CD4-positive, alpha-beta memory T cell (primary cell): ENCODE measurements at regions of chr19 and their contacts with region 1.

Region 1: DNA sequence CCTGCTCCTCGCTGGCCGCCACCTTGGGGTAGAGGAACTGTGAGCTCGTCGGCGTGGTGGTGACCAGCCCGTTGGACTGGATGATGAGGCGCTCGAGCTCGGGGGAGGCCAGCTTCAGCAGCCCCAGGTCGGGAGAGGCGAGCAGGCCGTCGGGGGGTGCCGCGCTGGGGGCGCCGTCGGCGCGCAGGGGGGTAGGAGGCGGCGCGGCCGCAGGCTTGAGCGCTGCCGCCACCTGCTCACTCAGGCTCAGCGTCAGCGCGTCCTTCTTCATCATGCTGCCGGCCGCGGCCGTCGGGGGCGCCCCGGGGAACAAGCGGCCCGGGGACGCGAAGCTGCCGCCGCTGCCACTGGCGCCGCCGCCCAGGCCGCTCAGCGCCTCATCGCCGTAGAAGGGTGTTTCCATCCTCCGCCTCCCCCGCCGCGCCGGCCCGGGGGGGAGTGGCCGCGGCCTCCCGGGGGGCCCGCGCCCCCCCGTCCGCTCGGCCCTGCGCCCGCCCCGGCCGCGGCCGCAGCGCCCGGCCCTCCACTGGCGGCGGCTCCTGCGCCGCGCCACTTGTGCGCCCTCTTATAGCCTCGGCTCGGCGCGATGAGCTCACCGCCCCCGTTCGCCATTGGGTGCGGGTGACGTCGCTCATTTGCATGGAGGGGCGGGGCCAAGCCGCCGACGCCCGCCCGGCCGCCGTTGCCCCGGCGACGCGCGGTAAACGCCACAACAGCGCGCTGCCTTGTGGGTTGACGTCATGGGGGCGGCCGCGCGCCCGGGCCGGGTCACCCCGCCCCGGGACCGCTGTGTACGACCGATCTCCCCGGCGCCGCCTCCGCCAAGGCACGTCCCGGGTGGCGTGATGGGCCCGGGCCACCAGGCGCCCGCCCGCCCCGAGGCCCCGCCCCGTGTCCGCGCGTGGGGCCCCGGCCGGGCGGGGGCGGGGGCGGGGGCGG is at the start of gene JUND:
- DNase-seq: peak; percentile 97 to 99 (median 99)
- H3K4me3 ChIP-seq: peak within 1 kb of the TSS; percentile 79 to 85
- H3K4me3 Mint-ChIP-seq: peak within 1 kb of the TSS; percentile 88 to 99 (median 96)
- H3K27ac ChIP-seq: peak within 1 kb of the TSS; percentile 98
- H3K27ac Mint-ChIP-seq: peak within 1 kb of the TSS; percentile 97 to 100 (median 98)
- H3K4me1 ChIP-seq: peaks cover 50% of the 10 kb centered on the region
- H3K4me1 Mint-ChIP-seq: peaks cover 30 to 60% (median 46%) of the 10 kb centered on the region in 4 donors
- H3K27me3 ChIP-seq: no peaks in the 10 kb centered on the region
- H3K27me3 Mint-ChIP-seq: peaks cover 0 to 6% of the 10 kb centered on the region in 2 donors
- total RNA-seq, gene JUND: 163 TPM

Region 2: DNA sequence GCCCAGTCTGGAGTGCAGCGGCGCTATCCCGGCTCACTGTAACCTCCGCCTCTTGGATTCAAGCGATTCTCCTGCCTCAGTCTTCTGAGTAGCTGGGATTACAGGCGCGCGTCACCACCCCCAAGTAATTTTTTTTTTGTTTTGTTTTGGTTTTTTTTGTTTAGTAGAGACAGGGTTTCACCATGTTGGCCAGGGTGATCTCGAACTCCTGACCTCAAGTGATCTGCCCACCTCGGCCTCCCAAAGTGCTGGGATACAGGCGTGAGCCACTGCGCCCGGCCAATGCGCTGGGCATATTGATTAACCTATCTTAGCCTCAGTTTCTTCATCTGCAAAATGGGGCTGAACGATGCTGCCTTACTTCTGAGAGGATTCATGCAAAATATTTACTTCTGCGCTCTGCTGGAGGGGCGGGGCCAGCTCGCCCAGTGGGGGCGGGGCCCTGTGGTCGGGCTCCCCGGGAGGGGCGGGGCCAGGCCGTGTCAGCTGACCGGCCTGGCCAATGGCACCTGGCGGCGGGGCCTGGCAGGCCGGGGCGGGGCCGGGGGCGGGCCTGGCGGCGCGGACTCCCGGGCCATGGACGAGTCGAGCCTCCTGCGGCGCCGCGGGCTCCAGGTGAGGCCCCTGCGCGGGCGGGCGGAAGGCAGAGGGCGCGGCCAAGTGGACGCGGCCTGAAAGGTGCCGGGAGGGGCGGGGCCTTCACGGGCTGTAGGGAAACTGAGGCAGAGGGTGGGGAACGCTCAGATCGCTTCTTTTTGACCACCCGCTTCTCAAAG is 183.9 kb before region 1 on chr19 and contains the start of gene MAST3:
- CTCF ChIA-PET with region 1: no interaction called
- POLR2A ChIA-PET with region 1: interaction called, 26 read pairs
- intact Hi-C with region 1: no loop called
- DNase-seq: peak; percentile 87 to 93 (median 93)
- H3K4me3 ChIP-seq: peak within 1 kb of the TSS; percentile 38 to 70
- H3K4me3 Mint-ChIP-seq: peak within 1 kb of the TSS; percentile 87 to 95 (median 89)
- H3K27ac ChIP-seq: peak within 1 kb of the TSS; percentile 68
- H3K27ac Mint-ChIP-seq: peak within 1 kb of the TSS; percentile 85 to 93 (median 89)
- H3K4me1 ChIP-seq: peaks cover 36% of the 10 kb centered on the region
- H3K4me1 Mint-ChIP-seq: peaks cover 22 to 50% (median 38%) of the 10 kb centered on the region in 4 donors
- H3K27me3 ChIP-seq: no peaks in the 10 kb centered on the region
- H3K27me3 Mint-ChIP-seq: no peaks in the 10 kb centered on the region
- total RNA-seq, gene MAST3: 51.6 to 53.9 TPM

Region 3: DNA sequence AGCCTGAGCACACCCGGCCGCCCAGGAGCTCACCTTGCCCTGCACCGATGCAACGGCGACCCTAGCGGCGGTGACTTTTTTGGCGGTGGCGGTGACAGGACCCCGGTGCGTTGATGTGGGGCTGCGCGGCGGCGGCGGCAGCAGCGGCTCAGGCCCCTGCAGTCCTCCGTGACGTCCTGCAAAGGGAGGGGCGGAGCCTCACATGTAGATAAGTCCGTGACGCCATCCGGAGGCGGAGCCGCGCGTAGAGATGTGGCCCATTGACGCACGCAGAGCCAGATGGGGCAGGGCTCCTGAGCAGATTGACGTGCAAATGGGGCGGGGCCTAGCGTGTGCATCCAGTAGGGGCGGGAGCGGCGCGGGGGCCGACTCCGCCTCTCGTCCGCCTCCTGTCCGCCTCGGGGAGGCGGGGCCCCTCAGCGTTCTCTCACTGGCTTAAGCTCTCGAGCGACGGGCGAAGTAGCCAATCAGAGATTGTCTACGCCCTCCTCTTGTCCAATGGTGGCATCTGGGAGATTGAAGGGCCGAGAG is 77.4 kb before region 1 on chr19 and contains the start of gene RAB3A:
- CTCF ChIA-PET with region 1: interaction called, 13 read pairs
- POLR2A ChIA-PET with region 1: interaction called, 77 read pairs
- intact Hi-C with region 1: loop called (anchors 2 kb)
- DNase-seq: peak; percentile 98 to 100 (median 100)
- H3K4me3 ChIP-seq: peak within 1 kb of the TSS; percentile 84 to 93
- H3K4me3 Mint-ChIP-seq: peak within 1 kb of the TSS; percentile 91 to 98 (median 96)
- H3K27ac ChIP-seq: peak within 1 kb of the TSS; percentile 63
- H3K27ac Mint-ChIP-seq: peak within 1 kb of the TSS; percentile 79 to 98 (median 98)
- H3K4me1 ChIP-seq: peaks cover 23% of the 10 kb centered on the region
- H3K4me1 Mint-ChIP-seq: peaks cover 13 to 33% (median 21%) of the 10 kb centered on the region in 4 donors
- H3K27me3 ChIP-seq: no peaks in the 10 kb centered on the region
- H3K27me3 Mint-ChIP-seq: peaks cover 0 to 1% of the 10 kb centered on the region in 2 donors
- total RNA-seq, gene RAB3A: 4.7 to 4.8 TPM

Region 4: DNA sequence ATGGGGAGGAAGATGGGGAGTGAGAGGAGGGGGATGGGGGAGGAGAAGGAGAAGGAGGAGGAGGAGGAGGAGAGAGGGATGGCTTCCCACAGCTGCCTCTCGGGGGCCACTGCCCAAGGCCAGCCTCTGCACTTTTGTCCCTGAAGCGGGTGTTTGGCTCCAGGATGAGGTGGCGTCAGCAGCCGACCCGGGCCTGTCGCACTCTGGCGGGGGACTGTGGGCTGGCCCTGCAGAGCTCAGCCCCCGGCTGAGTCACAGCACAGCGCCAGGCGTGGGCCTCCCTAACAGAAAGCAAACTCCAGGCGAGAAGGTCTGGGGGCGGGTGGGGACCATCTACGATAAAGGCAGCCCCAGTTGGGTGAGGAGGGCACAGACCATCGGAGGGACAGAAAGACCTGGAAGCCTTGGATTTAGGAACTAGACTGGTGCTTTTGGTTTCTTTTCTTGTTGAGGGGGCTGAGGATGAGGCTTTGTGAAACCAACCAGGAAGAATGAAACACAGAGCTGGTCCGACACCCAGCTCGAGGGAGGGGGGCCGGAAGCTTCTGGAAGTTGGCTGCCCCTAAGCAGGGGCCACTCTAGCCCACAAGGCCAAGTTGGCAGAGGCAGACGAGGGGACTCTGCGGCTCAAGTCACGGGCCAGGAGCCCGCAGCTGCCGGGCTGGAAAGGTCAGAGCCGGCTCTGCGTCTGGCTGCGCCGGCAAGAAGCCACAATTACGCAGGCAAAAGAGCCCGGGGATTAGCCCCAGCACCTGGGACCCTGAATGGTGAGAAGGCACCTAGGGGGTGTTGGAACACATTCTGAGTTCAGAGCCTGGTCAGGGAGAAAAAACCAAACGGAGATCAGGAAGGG is 23.3 kb after region 1 on chr19:
- CTCF ChIA-PET with region 1: interaction called, 118 read pairs
- POLR2A ChIA-PET with region 1: interaction called, 1,691 read pairs
- intact Hi-C with region 1: loop called (anchors 1 kb)
- DNase-seq: peak; percentile 73 to 88 (median 78)
- H3K4me3 ChIP-seq: peak overlapping the region; percentile 82 to 88
- H3K4me3 Mint-ChIP-seq: peak overlapping the region; percentile 89 to 98 (median 95)
- H3K27ac ChIP-seq: peak overlapping the region; percentile 99
- H3K27ac Mint-ChIP-seq: peak overlapping the region; percentile 99 to 100 (median 99)
- H3K4me1 ChIP-seq: peaks cover 70% of the 10 kb centered on the region
- H3K4me1 Mint-ChIP-seq: peaks cover 19 to 54% (median 34%) of the 10 kb centered on the region in 4 donors
- H3K27me3 ChIP-seq: no peaks in the 10 kb centered on the region
- H3K27me3 Mint-ChIP-seq: no peaks in the 10 kb centered on the region

Region 5: GRCh38 chr19:18340190-18340989 is 59.0 kb after region 1 on chr19 and contains the start of gene PGPEP1:
- CTCF ChIA-PET with region 1: interaction called, 37 read pairs
- POLR2A ChIA-PET with region 1: interaction called, 77 read pairs
- intact Hi-C with region 1: no loop called
- DNase-seq: peak in 4 of 5 donors; percentile 37 to 68 (median 41)
- H3K4me3 ChIP-seq: peak within 1 kb of the TSS; percentile 61 to 62
- H3K4me3 Mint-ChIP-seq: peak within 1 kb of the TSS; percentile 87 to 94 (median 90)
- H3K27ac ChIP-seq: peak within 1 kb of the TSS; percentile 61
- H3K27ac Mint-ChIP-seq: peak within 1 kb of the TSS; percentile 37 to 95 (median 87)
- H3K4me1 ChIP-seq: peaks cover 24% of the 10 kb centered on the region
- H3K4me1 Mint-ChIP-seq: peaks cover 5 to 25% (median 13%) of the 10 kb centered on the region in 4 donors
- H3K27me3 ChIP-seq: no peaks in the 10 kb centered on the region
- H3K27me3 Mint-ChIP-seq: no peaks in the 10 kb centered on the region
- total RNA-seq, gene PGPEP1: 46.2 to 49.2 TPM

Region 6: DNA sequence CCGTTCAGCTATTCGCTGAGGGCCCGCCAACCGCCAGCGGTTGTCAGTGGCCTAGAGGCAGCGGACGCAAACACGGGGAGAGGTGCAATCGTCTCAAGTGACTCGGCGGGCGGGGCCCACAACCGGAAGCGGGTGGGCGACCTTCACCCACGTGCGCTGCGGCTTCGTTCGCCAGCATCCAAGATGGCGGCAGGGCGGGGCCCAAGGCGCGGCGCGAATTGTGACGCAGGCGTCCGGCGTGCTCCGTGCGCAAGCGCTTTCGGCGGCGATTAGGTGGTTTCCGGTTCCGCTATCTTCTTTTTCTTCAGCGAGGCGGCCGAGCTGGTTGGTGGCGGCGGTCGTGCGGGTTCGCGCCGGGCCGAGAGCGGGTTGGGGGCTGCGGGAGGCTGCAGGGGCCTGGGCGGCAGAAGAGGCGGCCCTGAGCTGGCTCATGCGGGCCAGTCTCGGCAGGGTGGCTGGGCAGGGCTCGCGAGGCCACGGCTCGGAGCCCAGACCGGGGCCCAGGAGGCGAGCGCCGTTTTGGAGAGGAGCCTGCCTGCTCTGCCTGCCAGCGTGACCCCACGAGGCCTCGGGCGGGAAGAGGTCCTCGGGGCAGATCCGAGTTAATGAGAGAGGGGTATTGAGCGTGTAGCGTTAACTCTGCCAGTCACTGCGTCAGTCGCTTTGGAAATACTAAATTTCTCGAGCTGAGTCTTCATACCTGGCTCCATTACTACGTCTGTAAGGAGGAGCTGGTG is 290.4 kb after region 1 on chr19 and contains the start of gene UBA52:
- CTCF ChIA-PET with region 1: no interaction called
- POLR2A ChIA-PET with region 1: interaction called, 10 read pairs
- intact Hi-C with region 1: no loop called
- DNase-seq: peak; percentile 98 to 99 (median 99)
- H3K4me3 ChIP-seq: peak within 1 kb of the TSS; percentile 69 to 92
- H3K4me3 Mint-ChIP-seq: peak within 1 kb of the TSS; percentile 89 to 97 (median 94)
- H3K27ac ChIP-seq: peak within 1 kb of the TSS; percentile 97
- H3K27ac Mint-ChIP-seq: peak within 1 kb of the TSS; percentile 97 to 99 (median 98)
- H3K4me1 ChIP-seq: peaks cover 26% of the 10 kb centered on the region
- H3K4me1 Mint-ChIP-seq: peaks cover 12 to 36% (median 22%) of the 10 kb centered on the region in 4 donors
- H3K27me3 ChIP-seq: no peaks in the 10 kb centered on the region
- H3K27me3 Mint-ChIP-seq: no peaks in the 10 kb centered on the region
- total RNA-seq, gene UBA52: 1,962 to 1,978 TPM